Gastrocnemius medialis (tissue), 4 donors: ENCODE measurements at regions of chr4 and their contacts with region 1.

Region 1: GRCh38 chr4:83252782-83253405 is 31.7 kb downstream of the COQ2 start:
- DNase-seq: peak in 1 of 2 donors; percentile 16
- ATAC-seq: no peak
- H3K4me3 ChIP-seq: no peak overlapping the region
- H3K27ac ChIP-seq: no peak overlapping the region
- H3K4me1 ChIP-seq: peaks cover 0 to 7% of the 10 kb centered on the region in 2 donors
- H3K27me3 ChIP-seq: no peaks in the 10 kb centered on the region
- CTCF ChIP-seq: peak in 2 of 5 experiments; percentile 18 to 45
- POLR2A ChIP-seq: no peak

Region 2: GRCh38 chr4:82462415-82462831 is 790.5 kb before region 1 on chr4:
- in situ Hi-C with region 1: loop called in 3 of 4 experiments (anchors 25 kb)
- intact Hi-C with region 1: loop called (anchors 5 kb)
- DNase-seq: peak; percentile 64 to 87
- ATAC-seq: peak; percentile 82 to 93
- H3K4me3 ChIP-seq: no peak overlapping the region
- H3K27ac ChIP-seq: no peak overlapping the region
- H3K4me1 ChIP-seq: peaks cover 0 to 5% of the 10 kb centered on the region in 2 donors
- H3K27me3 ChIP-seq: no peaks in the 10 kb centered on the region
- CTCF ChIP-seq: peak; percentile 39 to 94 (median 71)
- POLR2A ChIP-seq: no peak

Region 3: DNA sequence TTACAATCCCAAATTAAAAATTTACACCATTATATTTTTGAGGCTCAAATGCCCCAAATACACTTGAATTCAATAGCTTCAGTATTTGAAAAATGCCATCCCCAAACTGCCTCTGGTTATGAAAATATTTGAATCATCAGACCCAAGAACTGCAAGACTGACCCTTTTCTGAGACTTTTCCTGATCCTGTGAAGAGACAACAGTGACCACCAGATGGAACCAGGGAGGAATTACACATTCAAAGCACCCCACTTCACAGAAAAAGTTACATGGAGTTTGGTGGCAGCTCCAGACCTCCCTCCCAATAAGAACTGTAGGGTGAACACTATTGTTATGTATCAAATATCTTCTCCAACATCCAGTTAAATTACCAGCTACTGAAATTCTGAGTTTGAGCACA is 410.3 kb before region 1 on chr4:
- in situ Hi-C with region 1: loop called in 1 of 4 experiments (anchors 25 kb)
- intact Hi-C with region 1: no loop called
- DNase-seq: no peak
- ATAC-seq: no peak
- H3K4me3 ChIP-seq: no peak overlapping the region
- H3K27ac ChIP-seq: no peak overlapping the region
- H3K4me1 ChIP-seq: no peaks in the 10 kb centered on the region
- H3K27me3 ChIP-seq: no peaks in the 10 kb centered on the region
- CTCF ChIP-seq: no peak
- POLR2A ChIP-seq: no peak

Region 4: GRCh38 chr4:82900331-82901128 is 352.4 kb before region 1 on chr4 and contains the start of gene THAP9:
- in situ Hi-C with region 1: loop called in 2 of 4 experiments (anchors 25 kb)
- intact Hi-C with region 1: no loop called
- DNase-seq: peak; percentile 99
- ATAC-seq: peak; percentile 96
- H3K4me3 ChIP-seq: peak within 1 kb of the TSS; percentile 65 to 92 (median 82)
- H3K27ac ChIP-seq: peak within 1 kb of the TSS; percentile 94 to 98 (median 96)
- H3K4me1 ChIP-seq: peaks cover 32 to 34% of the 10 kb centered on the region in 2 donors
- H3K27me3 ChIP-seq: no peaks in the 10 kb centered on the region
- CTCF ChIP-seq: no peak
- POLR2A ChIP-seq: peak; percentile 78 to 89
- total RNA-seq, gene THAP9: 7.6 to 11.1 (median 8.4) TPM

Region 5: DNA sequence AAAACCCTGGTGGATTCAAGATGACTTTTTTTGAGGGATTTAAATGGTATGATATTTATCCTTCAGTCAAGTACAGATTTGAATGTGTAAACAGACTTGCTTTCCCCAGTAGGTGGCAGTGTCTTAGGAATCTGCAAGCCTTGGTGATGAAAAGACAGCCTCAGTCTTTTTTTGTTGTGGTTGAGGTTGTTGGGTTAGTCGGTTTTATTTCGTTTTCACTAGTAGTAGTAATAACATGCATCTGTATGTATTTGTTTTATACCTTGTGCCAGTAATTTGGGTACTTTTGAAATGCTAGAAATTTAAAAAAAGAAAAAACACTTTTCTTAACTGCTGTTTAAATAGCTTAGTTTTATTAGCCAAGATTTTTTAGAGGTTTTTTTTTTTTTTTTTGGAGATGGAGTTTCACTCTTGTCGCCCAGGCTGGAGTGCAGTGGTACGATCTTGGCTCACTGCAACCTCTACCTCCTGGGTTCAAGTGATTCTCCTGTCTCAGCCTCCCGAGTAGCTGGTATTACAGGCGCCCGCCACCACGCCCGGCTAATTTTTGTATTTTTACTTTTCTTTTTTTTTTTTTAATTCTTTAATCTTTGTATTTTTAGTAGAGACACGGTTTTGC is 178.7 kb before region 1 on chr4:
- in situ Hi-C with region 1: loop called in 1 of 4 experiments (anchors 25 kb)
- intact Hi-C with region 1: loop called (anchors 5 kb)
- DNase-seq: no peak
- ATAC-seq: peak in 1 of 2 donors; percentile 52
- H3K4me3 ChIP-seq: no peak overlapping the region
- H3K27ac ChIP-seq: peak overlapping the region; percentile 65 to 75 (median 71)
- H3K4me1 ChIP-seq: peaks cover 15 to 21% of the 10 kb centered on the region in 2 donors
- H3K27me3 ChIP-seq: no peaks in the 10 kb centered on the region
- CTCF ChIP-seq: peak; percentile 27 to 65 (median 45)
- POLR2A ChIP-seq: no peak

Region 6: DNA sequence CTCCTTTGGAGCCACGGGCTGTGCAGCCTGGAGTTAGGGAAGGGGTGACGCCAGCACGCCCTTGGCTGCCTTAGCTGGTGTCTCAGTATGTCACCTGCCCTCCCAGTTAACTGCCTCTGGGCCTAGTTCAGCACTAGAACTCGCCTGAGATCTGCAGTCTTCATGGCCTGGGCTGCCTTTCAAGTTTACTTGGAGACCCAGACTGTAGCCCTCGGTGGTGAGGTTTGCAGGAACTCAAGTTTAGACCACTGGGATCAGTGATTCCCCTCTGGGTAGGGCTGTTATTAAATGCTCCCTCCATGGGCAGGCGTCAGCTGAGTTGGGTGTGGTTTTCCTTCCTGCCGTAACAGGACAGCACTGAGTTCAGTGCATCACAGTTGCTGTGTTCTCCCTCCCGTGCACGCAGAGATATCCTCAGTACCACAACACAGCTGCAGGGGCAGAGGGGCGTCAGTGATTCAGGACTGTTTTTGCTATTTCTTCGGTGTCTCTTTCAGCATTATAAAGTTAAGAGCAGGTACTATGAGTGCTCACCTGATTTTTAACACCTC is 168.9 kb before region 1 on chr4:
- in situ Hi-C with region 1: loop called in 1 of 4 experiments (anchors 25 kb)
- intact Hi-C with region 1: loop called (anchors 5 kb)
- DNase-seq: no peak
- ATAC-seq: no peak
- H3K4me3 ChIP-seq: no peak overlapping the region
- H3K27ac ChIP-seq: no peak overlapping the region
- H3K4me1 ChIP-seq: no peaks in the 10 kb centered on the region
- H3K27me3 ChIP-seq: no peaks in the 10 kb centered on the region
- CTCF ChIP-seq: no peak
- POLR2A ChIP-seq: no peak